ENCODE measurements at regions of chr11 and their contacts with region 1.

Region 1: DNA sequence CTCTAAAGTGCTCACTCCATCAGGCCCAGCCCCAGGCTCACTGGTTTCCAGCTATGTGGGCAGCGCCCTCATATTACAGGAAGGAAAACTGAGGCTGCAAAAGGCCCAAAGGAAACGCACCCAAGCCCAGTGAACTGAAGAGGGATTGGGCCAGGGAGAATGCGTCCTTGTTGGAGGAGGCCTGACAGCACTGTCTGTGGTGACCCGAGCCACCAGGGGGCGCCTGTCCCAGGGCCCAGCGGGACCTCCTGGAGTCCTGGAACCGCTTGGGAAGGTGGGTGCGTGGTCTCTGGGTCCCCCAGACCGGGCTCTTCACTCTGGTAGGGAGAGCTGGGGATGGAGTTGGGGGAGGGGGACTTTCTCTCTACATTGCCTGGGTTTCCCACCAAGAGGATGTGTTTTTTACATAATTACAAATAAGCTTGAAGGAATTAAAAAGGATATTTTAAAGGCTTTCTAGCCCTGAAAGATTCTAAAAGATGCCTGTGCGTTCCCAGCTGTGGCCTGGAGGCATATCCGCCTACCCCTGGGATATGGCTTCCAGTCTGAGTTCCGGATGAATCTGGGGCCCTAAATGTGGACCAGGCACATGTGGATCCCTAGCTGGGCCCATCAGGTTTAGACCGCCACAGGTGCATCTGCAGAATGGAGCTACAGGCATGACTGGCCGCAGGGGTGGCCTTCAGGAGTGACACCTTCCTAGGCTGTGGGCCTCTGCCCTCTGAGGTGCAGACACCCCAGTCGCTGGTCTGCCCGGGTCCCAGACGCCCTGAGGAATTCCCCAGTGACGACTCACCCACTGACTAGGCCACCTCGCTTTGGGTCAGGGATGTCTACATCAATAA is 4.2 kb downstream of the SPI1 start:
- DNase-seq: peak; percentile 83
- ATAC-seq: peak; percentile 35
- H3K4me3 ChIP-seq: no peak overlapping the region
- H3K4me3 Mint-ChIP-seq: peak overlapping the region; percentile 41
- H3K27ac ChIP-seq: peak overlapping the region in 1 of 2 donors; percentile 68
- H3K27ac Mint-ChIP-seq: peak overlapping the region; percentile 65
- H3K4me1 ChIP-seq: peaks cover 40 to 46% of the 10 kb centered on the region in 2 donors
- H3K4me1 Mint-ChIP-seq: peaks cover 51% of the 10 kb centered on the region
- H3K27me3 ChIP-seq: no peaks in the 10 kb centered on the region
- H3K27me3 Mint-ChIP-seq: no peaks in the 10 kb centered on the region
- CTCF ChIP-seq: peak; percentile 91

Region 2: DNA sequence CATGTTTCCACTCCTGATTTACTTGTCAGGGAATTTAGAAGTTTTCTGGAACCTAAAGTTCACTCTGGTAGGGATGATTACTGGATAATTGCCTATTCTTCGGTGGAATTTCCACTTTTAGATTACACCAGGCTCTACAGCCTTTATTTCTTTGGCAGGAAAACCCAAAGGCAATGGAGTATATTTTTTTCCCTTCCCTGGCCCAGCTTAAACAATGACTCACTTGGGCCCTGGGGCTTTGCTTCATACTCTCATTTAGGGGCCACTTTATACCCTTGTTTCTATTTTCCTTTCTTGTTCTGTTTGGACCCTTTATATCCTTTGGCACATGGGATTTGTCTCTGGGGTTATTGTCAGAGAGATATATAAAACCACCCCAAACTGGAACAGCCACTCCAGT is 322.9 kb before region 1 on chr11:
- CTCF ChIA-PET with region 1: no interaction called
- POLR2A ChIA-PET with region 1: no interaction called
- intact Hi-C with region 1: no loop called
- DNase-seq: no peak
- ATAC-seq: no peak
- H3K4me3 ChIP-seq: no peak overlapping the region
- H3K4me3 Mint-ChIP-seq: no peak overlapping the region
- H3K27ac ChIP-seq: no peak overlapping the region
- H3K27ac Mint-ChIP-seq: no peak overlapping the region
- H3K4me1 ChIP-seq: no peaks in the 10 kb centered on the region
- H3K4me1 Mint-ChIP-seq: peaks cover 3% of the 10 kb centered on the region
- H3K27me3 ChIP-seq: no peaks in the 10 kb centered on the region
- H3K27me3 Mint-ChIP-seq: no peaks in the 10 kb centered on the region
- CTCF ChIP-seq: no peak

Region 3: DNA sequence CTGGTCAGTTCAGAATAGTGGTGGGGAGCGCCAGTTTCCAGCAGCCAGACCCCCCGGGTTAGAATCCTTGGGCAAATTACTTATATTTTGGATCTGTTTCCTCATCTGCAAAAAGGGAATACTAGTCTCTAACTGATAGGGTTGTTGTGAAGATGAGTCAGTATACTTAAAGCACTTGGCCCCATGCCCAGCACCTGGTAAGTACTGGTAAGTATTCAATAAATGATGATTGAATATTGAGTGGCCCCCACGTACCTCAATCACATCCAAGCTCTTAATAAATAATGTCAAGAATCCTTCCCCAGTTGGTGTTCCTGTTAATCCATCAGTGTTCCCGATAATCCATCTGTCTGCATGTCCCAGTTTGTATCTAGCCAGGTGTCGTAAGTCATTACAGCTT is 137.6 kb before region 1 on chr11:
- CTCF ChIA-PET with region 1: no interaction called
- POLR2A ChIA-PET with region 1: no interaction called
- intact Hi-C with region 1: no loop called
- DNase-seq: no peak
- ATAC-seq: no peak
- H3K4me3 ChIP-seq: no peak overlapping the region
- H3K4me3 Mint-ChIP-seq: no peak overlapping the region
- H3K27ac ChIP-seq: no peak overlapping the region
- H3K27ac Mint-ChIP-seq: no peak overlapping the region
- H3K4me1 ChIP-seq: no peaks in the 10 kb centered on the region
- H3K4me1 Mint-ChIP-seq: no peaks in the 10 kb centered on the region
- H3K27me3 ChIP-seq: no peaks in the 10 kb centered on the region
- H3K27me3 Mint-ChIP-seq: no peaks in the 10 kb centered on the region
- CTCF ChIP-seq: no peak

Region 4: DNA sequence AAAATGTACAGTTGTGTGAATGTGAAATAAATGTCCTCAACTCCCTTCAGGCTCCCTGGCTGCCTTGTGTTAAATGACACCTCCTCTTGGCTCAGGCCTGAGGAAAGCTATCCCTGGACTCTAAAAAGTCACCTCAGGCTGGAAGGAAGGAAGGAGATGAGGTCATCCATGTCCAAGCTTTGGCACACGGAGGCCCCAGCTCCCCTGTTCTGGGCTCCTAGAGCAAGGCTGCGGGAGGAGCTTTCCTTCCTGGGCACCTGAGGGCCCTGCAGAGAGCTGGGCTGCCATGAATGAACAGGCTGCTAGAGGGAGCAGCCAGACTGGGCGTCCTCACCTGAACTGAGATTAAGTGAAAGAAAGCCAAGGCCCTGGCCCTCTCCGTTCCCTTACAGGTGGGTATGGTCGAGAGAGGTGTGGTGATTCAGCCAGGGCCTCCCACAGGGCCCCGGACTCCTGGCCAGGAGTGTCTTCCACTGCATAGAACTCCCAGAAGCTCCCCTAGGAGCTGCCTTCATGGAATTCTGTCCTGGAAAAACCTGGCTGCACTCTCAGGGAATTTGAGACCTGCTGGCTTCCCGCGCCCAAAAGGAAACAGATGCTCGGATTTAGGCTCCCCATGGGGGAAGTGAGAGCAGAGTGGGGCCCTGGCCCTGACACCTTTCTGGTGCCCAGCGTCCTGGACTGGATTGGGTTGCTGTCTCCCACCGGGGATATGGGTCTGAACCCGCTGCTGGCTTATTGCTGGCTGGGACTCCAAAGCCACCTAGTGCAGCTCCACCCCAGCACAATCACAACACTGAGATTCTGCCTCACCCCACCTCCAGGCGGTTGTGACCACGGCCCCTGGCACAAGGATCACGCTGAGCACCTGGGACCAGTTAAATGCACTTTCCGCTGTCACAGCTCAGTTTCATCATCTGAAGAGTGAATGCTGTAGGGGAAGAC is 43.8 kb before region 1 on chr11:
- CTCF ChIA-PET with region 1: interaction called, 11 read pairs
- POLR2A ChIA-PET with region 1: no interaction called
- intact Hi-C with region 1: loop called (anchors 10 kb)
- DNase-seq: no peak
- ATAC-seq: no peak
- H3K4me3 ChIP-seq: no peak overlapping the region
- H3K4me3 Mint-ChIP-seq: no peak overlapping the region
- H3K27ac ChIP-seq: no peak overlapping the region
- H3K27ac Mint-ChIP-seq: peak overlapping the region; percentile 20
- H3K4me1 ChIP-seq: peaks cover 0 to 16% of the 10 kb centered on the region in 2 donors
- H3K4me1 Mint-ChIP-seq: peaks cover 14% of the 10 kb centered on the region
- H3K27me3 ChIP-seq: no peaks in the 10 kb centered on the region
- H3K27me3 Mint-ChIP-seq: no peaks in the 10 kb centered on the region
- CTCF ChIP-seq: no peak

Region 5: DNA sequence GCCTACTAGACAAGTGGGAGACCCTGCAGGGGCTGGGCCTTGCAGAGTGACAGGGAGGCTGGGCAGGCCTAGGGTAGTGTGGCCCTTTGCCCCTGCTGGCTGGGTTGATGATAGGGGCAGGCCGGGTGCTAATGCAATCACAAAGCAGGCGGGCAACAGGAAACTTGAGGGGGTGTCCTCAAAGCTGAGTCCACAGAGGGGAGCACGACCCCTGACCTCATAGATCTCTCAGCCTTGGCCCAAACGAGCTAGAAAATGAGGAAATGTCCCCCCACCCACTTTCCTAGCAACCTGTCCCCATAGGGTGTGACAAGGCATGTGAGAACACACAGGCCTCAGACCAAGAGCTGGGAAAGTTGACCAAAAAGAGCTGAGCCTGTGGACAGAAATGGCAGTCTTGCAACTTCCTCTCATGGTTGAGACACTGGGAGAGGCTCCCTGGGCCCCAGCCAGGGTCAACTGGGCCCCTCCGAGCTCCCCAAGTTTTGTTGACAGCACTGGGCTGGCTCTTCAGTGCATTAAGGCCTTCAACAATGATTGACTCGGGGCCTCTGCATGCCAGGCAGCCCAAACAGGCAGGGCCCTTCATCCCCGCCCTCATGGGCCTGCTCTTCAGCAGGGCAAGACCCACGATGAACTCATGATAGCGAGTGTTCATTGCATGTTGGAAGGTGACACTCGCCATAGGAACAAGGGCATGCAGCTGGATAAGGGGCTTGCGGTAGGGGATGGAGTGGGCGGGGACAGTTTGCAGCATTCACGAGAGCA is 14.0 kb after region 1 on chr11:
- CTCF ChIA-PET with region 1: interaction called, 72 read pairs
- POLR2A ChIA-PET with region 1: interaction called, 39 read pairs
- intact Hi-C with region 1: no loop called
- DNase-seq: no peak
- ATAC-seq: no peak
- H3K4me3 ChIP-seq: no peak overlapping the region
- H3K4me3 Mint-ChIP-seq: no peak overlapping the region
- H3K27ac ChIP-seq: no peak overlapping the region
- H3K27ac Mint-ChIP-seq: peak overlapping the region; percentile 61
- H3K4me1 ChIP-seq: peaks cover 12 to 33% of the 10 kb centered on the region in 2 donors
- H3K4me1 Mint-ChIP-seq: peaks cover 27% of the 10 kb centered on the region
- H3K27me3 ChIP-seq: no peaks in the 10 kb centered on the region
- H3K27me3 Mint-ChIP-seq: no peaks in the 10 kb centered on the region
- CTCF ChIP-seq: no peak

Region 6: DNA sequence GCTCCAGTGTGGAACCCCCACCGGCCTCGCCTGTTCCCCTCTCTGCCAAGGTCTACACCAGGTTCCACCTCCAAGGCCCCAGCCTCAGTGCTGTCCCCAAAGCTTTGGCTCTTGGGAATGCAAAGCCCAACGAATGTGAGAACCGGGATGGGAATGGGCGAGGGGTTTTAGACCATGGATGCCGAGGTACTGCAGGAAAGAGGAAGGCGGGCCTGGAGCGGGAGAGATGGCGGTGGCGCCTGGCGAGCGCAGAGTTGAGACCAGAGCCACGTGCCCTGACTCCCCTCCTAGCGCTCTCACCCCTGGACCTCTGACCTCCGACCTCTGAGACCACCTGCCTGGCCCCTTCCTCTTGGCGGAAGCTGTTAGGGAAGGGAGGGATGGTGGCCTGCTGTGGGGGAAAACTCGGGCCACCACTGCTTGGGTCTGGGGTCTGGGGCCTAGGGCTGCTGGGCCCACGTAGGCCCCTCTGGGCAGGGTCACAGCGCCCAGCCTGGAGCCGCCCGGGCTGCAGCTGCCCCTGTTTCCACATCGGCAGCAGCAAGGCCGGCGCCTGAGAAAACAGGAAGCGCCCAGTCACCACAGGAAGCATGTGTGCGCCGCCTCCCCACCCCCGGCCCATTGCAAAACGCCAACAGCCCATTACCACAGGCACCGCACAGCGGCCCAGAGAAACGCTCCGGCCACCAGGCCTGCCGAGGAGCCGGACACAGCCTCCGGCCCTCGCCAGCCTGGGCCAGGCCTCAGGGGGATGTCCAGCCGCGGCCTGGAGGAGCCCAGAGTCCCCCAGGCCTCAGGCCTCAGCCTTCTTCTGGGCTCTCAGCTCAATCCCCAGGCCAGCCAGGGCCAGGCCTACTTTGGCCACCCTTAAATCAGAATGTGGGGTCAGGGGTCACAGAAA is 20.5 kb after region 1 on chr11:
- CTCF ChIA-PET with region 1: interaction called, 345 read pairs
- POLR2A ChIA-PET with region 1: interaction called, 50 read pairs
- intact Hi-C with region 1: loop called (anchors 1 kb)
- DNase-seq: peak; percentile 80
- ATAC-seq: peak; percentile 76
- H3K4me3 ChIP-seq: peak overlapping the region; percentile 2 to 55 (median 45)
- H3K4me3 Mint-ChIP-seq: peak overlapping the region; percentile 85
- H3K27ac ChIP-seq: peak overlapping the region; percentile 95 to 97
- H3K27ac Mint-ChIP-seq: peak overlapping the region; percentile 98
- H3K4me1 ChIP-seq: peaks cover 59 to 82% of the 10 kb centered on the region in 2 donors
- H3K4me1 Mint-ChIP-seq: peaks cover 70% of the 10 kb centered on the region
- H3K27me3 ChIP-seq: no peaks in the 10 kb centered on the region
- H3K27me3 Mint-ChIP-seq: no peaks in the 10 kb centered on the region
- CTCF ChIP-seq: no peak

Region 7: GRCh38 chr11:47399860-47400767 is 26.0 kb after region 1 on chr11:
- CTCF ChIA-PET with region 1: interaction called, 345 read pairs
- POLR2A ChIA-PET with region 1: interaction called, 50 read pairs
- intact Hi-C with region 1: loop called (anchors 1 kb)
- DNase-seq: peak; percentile 71
- ATAC-seq: peak; percentile 82
- H3K4me3 ChIP-seq: peak overlapping the region; percentile 71 to 85 (median 81)
- H3K4me3 Mint-ChIP-seq: peak overlapping the region; percentile 91
- H3K27ac ChIP-seq: peak overlapping the region; percentile 85
- H3K27ac Mint-ChIP-seq: peak overlapping the region; percentile 96
- H3K4me1 ChIP-seq: peaks cover 45 to 53% of the 10 kb centered on the region in 2 donors
- H3K4me1 Mint-ChIP-seq: peaks cover 45% of the 10 kb centered on the region
- H3K27me3 ChIP-seq: no peaks in the 10 kb centered on the region
- H3K27me3 Mint-ChIP-seq: no peaks in the 10 kb centered on the region
- CTCF ChIP-seq: no peak

Region 8: DNA sequence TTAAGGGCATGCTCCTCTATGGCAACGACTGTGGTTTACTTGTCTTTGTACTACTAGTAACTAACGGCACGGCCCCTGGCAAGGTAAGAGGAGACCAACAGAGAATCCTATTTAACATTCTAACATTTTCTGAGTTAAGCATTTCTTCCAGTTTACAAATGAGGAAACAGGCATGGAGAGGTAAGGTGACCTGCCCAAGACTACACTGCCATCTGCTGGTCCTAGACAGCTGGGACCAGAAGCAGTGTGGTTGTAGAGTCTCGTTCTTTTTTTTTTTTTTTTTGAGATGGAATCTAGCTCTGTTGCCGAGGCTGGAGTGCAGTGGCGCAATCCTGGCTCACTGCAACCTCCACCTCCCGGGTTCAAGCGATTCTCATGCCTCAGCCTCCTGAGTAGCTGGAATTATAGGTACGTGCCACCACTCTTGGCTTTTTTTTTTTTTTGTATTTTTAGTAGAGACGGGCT is 80.1 kb after region 1 on chr11:
- CTCF ChIA-PET with region 1: interaction called, 3 read pairs
- POLR2A ChIA-PET with region 1: no interaction called
- intact Hi-C with region 1: loop called (anchors 1 kb)
- DNase-seq: peak; percentile 85
- ATAC-seq: peak; percentile 94
- H3K4me3 ChIP-seq: no peak overlapping the region
- H3K4me3 Mint-ChIP-seq: no peak overlapping the region
- H3K27ac ChIP-seq: no peak overlapping the region
- H3K27ac Mint-ChIP-seq: no peak overlapping the region
- H3K4me1 ChIP-seq: peaks cover 0 to 5% of the 10 kb centered on the region in 2 donors
- H3K4me1 Mint-ChIP-seq: peaks cover 4% of the 10 kb centered on the region
- H3K27me3 ChIP-seq: no peaks in the 10 kb centered on the region
- H3K27me3 Mint-ChIP-seq: no peaks in the 10 kb centered on the region
- CTCF ChIP-seq: peak; percentile 83

Measured in B cell (primary cell).